H1 (cell line): ENCODE measurements at regions of chr1 and their contacts with region 1.

Region 1: DNA sequence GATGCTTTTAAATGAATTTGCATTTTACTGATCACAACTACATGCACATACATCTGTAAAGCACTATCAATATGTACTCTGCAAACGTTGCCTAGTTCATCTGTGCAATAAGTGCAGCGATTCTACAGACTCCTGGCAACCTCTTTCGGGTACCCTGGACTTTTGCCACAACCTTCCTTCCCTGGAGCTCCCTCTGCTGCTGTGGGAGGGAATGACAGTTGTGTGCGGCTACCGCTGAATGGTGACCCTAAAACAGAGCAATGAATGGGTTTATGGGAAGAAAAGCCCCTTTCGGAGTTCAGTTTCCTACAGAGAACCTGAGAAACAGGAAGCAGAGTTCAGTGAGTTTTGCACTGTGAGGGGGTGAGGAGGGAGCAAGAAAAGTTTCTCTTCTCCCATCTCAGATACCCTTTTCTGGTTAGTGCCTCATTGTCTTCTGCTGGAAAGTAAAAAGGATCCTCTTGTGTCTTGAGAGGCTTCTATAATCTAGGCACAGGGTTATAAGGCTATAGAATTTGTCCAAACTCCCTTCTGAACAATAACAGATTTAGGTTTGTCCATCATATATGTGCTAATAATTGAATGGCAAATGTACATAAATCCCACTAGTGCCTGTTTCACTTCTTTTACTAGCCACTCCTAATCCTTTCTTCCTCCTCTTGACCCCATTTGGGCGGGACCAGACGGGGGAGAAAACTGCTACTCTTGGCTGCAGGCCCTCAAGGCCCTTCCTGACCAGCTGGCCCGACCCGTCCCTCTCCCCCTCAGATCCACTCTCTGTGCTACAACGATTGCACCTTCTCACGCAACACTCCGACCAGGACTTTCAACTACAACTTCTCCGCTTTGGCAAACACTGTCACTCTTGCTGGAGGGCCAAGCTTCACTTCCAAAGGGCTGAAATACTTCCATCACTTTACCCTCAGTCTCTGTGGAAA is 19.8 kb upstream of the SARS1 start:
- DNase-seq: peak in 1 of 2 experiments; percentile 92
- H3K4me3 ChIP-seq: no peak overlapping the region
- H3K27ac ChIP-seq: no peak overlapping the region
- H3K4me1 ChIP-seq: peaks cover 0 to 2% (median 0%) of the 10 kb centered on the region in 4 experiments; a peak in 1 of 7 replicates
- H3K27me3 ChIP-seq: no peaks in the 10 kb centered on the region
- CTCF ChIP-seq: peak; percentile 79 to 87 (median 84)
- EP300 ChIP-seq: no peak
- POLR2A ChIP-seq: no peak
- RAD21 ChIP-seq: peak; percentile 74 to 84

Region 2: DNA sequence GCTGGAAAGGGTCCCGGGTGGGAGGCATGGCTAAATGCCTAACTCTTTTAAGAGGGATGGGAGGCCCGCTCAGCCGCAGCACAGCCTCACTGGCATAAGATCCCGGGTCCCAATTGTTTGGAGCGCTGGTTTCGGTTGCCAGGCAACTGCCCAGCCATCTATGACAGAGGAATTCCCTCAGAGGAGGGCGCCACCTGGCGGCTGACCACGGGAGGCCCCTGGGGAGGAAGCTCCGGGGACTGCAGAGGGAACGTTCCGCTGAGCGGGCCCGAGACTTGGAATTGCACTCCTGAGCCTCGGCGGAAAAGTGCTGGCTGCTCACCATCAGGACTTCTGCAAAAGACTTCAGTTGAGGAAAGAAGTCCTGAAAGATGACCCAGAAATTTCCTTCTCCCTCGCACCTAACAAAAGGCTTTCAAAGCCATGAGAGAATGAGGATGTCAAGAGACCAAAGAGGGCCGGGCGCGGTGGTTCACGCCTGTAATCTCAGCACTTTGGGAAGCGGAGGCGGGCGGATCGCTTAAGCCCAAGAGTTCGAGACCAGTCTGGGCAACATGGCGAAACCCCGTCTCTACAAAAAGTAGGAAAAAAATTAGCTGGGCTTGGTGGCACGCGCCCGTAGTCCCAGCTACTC is 81.2 kb before region 1 on chr1:
- CTCF ChIA-PET with region 1: interaction called, 11 read pairs
- POLR2A ChIA-PET with region 1: no interaction called
- DNase-seq: peak; percentile 85 to 100
- H3K4me3 ChIP-seq: peak overlapping the region in 1 of 4 experiments; percentile 72; a peak in 5 of 8 replicates
- H3K27ac ChIP-seq: no peak overlapping the region
- H3K4me1 ChIP-seq: peaks cover 0 to 9% (median 3%) of the 10 kb centered on the region in 4 experiments; a peak in 4 of 7 replicates
- H3K27me3 ChIP-seq: peaks cover 15 to 45% (median 32%) of the 10 kb centered on the region in 4 experiments
- CTCF ChIP-seq: peak; percentile 86 to 96 (median 92)
- EP300 ChIP-seq: peak in 1 of 2 experiments; percentile 73; a peak in 1 of 3 replicates
- POLR2A ChIP-seq: no peak
- RAD21 ChIP-seq: peak; percentile 72 to 83

Region 3: DNA sequence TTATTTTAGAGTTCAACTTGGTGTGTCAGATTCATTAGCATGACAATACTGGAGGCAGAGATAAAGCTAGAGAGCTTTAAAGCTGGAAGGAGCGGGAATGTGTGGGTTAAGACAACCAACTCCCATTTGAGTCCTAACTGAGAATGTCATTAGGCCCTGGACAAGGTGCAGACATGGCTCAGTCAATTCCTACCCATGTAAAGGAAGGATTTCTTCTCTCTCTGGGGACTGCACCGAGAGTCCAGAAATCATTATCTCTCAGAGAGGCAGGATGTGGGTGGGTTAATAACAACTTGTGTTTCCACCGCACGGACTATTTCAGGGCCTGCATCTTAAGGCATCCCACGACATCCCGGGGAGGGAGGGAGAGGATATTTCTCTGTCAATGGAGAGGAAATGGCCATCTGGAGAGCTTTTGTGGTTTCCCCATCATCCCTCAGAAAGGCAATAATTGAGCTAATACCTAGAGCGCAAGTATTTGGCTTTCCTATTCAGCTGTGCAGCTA is 26.9 kb before region 1 on chr1:
- CTCF ChIA-PET with region 1: interaction called, 24 read pairs
- POLR2A ChIA-PET with region 1: no interaction called
- DNase-seq: no peak
- H3K4me3 ChIP-seq: no peak overlapping the region
- H3K27ac ChIP-seq: no peak overlapping the region
- H3K4me1 ChIP-seq: peaks cover 0 to 4% (median 0%) of the 10 kb centered on the region in 4 experiments; a peak in 4 of 7 replicates
- H3K27me3 ChIP-seq: no peaks in the 10 kb centered on the region
- CTCF ChIP-seq: no peak
- EP300 ChIP-seq: no peak
- POLR2A ChIP-seq: no peak
- RAD21 ChIP-seq: no peak

Region 4: GRCh38 chr1:109213785-109214468 is 20.0 kb after region 1 on chr1 and contains the start of gene SARS1:
- CTCF ChIA-PET with region 1: interaction called, 82 read pairs
- POLR2A ChIA-PET with region 1: interaction called, 18 read pairs
- DNase-seq: peak in 1 of 2 experiments; percentile 91
- H3K4me3 ChIP-seq: peak within 1 kb of the TSS; percentile 88 to 99 (median 96)
- H3K27ac ChIP-seq: peak within 1 kb of the TSS; percentile 78
- H3K4me1 ChIP-seq: peaks cover 0 to 5% (median 2%) of the 10 kb centered on the region in 4 experiments; a peak in 2 of 7 replicates
- H3K27me3 ChIP-seq: no peaks in the 10 kb centered on the region
- CTCF ChIP-seq: no peak
- EP300 ChIP-seq: no peak
- POLR2A ChIP-seq: peak in 1 of 2 experiments; percentile 69; a peak in 1 of 3 replicates
- RAD21 ChIP-seq: no peak
- total RNA-seq, gene SARS1: 136 and 146 TPM in 2 replicates

Region 5: DNA sequence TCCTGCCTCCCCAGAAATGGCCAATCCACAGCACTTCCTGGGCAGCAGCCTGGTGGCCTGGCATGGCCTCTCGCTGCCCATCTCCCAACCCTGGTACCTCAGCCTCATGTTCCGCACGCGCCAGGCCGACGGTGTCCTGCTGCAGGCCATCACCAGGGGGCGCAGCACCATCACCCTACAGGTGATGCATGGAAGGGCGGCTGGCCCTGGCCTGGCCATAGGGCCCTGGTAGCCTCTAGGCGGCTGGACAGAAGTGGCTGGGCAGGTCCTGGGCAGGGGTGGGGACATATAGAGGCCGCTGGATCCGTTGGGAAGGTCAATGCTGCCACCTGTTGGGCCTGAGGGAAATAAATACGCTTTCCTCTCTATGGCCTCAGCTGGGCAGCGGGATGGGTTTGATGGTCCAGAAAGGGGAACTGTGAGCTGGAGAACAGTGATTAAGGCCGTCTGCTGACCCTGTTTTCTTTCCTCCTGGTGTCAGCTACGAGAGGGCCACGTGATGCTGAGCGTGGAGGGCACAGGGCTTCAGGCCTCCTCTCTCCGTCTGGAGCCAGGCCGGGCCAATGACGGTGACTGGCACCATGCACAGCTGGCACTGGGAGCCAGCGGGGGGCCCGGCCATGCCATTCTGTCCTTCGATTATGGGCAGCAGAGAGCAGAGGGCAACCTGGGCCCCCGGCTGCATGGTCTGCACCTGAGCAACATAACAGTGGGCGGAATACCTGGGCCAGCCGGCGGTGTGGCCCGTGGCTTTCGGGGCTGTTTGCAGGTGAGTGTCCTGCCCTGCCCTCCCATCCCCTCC is 69.9 kb after region 1 on chr1:
- CTCF ChIA-PET with region 1: interaction called, 39 read pairs
- POLR2A ChIA-PET with region 1: interaction called, 3 read pairs
- DNase-seq: peak; percentile 87 to 98
- H3K4me3 ChIP-seq: no peak overlapping the region; a peak in 1 of 8 replicates
- H3K27ac ChIP-seq: no peak overlapping the region
- H3K4me1 ChIP-seq: peaks cover 0 to 11% (median 3%) of the 10 kb centered on the region in 4 experiments; a peak in 4 of 7 replicates
- H3K27me3 ChIP-seq: no peaks in the 10 kb centered on the region
- CTCF ChIP-seq: peak in 2 of 3 experiments; percentile 100; a peak in 3 of 4 replicates
- EP300 ChIP-seq: no peak
- POLR2A ChIP-seq: no peak
- RAD21 ChIP-seq: peak; percentile 90 to 93